Dorsolateral prefrontal cortex (tissue), 120 donors: ENCODE measurements at regions of chr12 and their contacts with region 1.

Region 1: DNA sequence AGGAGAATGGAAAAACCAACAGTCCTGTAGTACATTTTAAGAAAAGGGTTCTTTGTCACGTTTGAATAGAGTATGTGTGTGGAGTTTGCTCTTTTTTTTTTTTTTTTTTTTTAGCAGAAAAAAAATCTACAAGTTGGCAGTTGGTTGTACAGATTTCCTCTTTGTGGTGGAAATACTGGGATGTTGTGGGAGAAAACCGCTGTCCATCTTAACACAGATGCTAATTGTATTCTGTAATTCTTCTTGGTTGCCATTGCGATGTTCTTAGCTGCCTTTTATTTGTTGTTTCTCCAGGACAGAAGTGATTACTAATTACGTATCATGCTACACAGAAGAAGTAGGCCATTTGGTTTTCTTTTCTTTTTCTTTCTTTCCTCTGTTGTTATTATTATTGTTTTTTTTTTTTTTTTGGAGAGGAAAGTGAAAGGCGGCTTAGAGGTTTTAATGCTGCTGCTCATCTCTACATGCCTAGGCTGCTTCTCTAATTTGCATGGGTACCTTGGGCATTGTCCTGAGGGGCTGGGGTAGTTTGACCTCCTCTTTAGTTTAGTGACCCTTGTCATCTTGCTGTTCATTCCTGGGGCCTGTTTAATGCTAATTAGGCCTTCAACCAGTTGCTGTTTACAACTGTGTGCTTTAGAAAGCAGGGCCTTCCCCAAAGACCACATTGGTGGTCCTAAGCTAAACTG is 94.7 kb downstream of the TMTC2 start:
- DNase-seq: no peak
- H3K4me3 ChIP-seq: peak overlapping the region in 45 of 59 donors; percentile 3 to 60 (median 28)
- H3K27ac ChIP-seq: peak overlapping the region; percentile 7 to 99 (median 93)
- H3K27me3 ChIP-seq: no peaks in the 10 kb centered on the region
- CTCF ChIP-seq: peak in 5 of 56 donors; percentile 8 to 29 (median 20)

Region 2: DNA sequence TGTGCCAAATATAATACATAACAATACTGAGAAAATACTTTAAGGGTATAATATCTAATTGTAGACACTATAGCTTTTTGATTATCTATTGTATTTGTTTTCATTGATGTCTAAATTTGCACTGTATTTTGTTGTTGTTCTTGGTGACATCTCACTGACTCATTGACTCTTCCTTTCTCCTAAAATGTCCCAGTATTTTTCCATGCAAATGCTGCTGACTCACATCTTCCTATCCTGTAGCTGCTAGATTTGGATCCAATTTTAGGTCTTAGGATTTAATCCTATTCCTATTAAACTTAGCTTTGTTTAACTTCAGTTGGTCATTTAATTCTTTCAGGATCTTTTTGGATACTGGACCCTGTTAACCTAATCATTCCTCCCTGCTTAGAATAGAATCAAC is 53.8 kb after region 1 on chr12:
- intact Hi-C with region 1: loop called in 1 of 2 experiments (anchors 5 kb)
- DNase-seq: no peak
- H3K4me3 ChIP-seq: no peak overlapping the region
- H3K27ac ChIP-seq: peak overlapping the region in 54 of 59 donors; percentile 7 to 97 (median 91)
- H3K27me3 ChIP-seq: no peaks in the 10 kb centered on the region
- CTCF ChIP-seq: no peak

Region 3: DNA sequence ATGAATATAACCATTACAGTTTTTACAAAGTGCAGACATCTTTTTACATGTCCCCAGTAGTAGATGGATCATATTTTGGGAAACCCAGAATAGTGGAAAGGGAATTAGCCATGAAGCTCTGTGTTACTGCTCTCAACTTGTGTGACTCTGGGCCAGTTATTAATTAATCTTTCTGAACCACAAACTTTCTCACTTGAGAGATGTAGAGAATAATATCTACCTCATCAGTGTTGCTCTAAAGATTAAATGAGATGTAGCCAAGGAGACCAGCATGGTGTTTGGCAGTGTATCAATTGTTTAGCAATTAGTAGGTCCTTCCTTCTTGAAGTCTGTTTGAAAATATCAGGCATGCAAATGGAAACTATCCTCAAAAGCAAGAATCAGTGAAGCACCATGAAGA is 74.4 kb after region 1 on chr12:
- intact Hi-C with region 1: no loop called
- DNase-seq: no peak
- H3K4me3 ChIP-seq: no peak overlapping the region
- H3K27ac ChIP-seq: peak overlapping the region in 46 of 59 donors; percentile 1 to 74 (median 54)
- H3K27me3 ChIP-seq: no peaks in the 10 kb centered on the region
- CTCF ChIP-seq: no peak

Region 4: DNA sequence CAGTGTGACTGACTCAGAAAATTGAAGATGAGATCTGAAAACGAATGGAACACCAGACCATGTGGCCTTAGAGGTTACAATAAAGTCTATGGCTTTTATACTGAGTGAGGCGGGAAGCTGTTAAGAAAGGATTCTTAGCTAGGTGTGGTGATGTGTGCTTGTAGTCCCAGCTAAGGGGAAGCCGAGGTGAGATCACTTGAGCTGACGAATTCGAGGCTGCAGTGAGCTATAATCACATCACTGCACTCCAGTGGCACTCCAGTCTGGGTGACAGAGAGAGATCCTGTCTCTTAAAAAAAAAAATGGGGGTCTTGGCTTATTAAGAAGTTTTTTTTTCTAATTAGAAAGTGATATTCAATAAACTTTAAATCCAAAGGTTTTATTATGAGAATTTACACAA is 583.9 kb after region 1 on chr12:
- intact Hi-C with region 1: no loop called
- DNase-seq: no peak
- H3K4me3 ChIP-seq: no peak overlapping the region
- H3K27ac ChIP-seq: no peak overlapping the region
- H3K27me3 ChIP-seq: peaks cover 0 to 4% (median 0%) of the 10 kb centered on the region in 45 donors
- CTCF ChIP-seq: no peak